ENCODE measurements at regions of chr6 and their contacts with region 1.

Region 1: DNA sequence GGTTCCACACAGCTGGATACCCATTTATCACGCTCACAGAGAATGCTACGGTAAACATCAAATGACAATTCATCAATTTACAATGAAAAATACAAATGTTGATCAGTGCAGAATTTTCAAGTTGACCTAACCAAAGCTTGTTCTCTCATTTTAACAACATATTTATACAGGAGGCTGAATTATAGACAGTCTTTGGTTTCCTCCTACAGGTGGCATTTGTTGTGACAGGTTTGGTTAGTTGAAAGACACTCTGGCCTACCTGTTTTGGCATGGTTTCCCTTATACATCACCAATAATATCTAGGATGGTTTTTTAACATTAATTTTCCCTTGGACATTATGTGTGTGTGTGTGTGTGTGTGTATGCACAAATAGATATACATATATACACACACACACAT is 642.5 kb upstream of the MMS22L start:
- DNase-seq: no peak
- ATAC-seq: peak; percentile 79
- H3K4me3 Mint-ChIP-seq: no peak overlapping the region
- H3K27ac Mint-ChIP-seq: peak overlapping the region; percentile 47; the same call in 1 of the 2 replicates
- H3K4me1 Mint-ChIP-seq: peaks cover 31% of the 10 kb centered on the region
- H3K27me3 Mint-ChIP-seq: no peaks in the 10 kb centered on the region
- CTCF ChIP-seq: no peak

Region 2: DNA sequence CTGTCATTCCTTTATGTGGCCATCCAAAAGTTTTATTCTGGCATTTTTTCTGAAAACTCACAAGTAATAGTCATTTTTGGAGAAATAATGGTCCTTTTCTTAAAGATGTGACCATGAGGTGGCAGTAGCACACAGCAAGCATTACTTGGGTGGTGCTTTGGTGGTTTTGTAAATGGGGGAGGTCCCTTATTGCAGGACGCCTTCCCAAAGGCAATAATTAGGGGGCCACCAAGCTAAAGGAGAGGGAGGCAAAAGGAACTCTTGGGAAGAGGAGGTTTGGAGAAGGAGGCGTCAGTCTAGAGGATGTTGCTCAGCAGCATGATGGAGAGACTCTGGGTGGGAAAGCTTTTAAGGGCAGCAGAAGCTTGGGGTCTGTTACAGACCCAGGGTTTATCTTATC is 219.9 kb before region 1 on chr6:
- CTCF ChIA-PET with region 1: interaction called, 11 read pairs
- POLR2A ChIA-PET with region 1: no interaction called
- DNase-seq: peak; percentile 25
- ATAC-seq: peak; percentile 93
- H3K4me3 Mint-ChIP-seq: no peak overlapping the region
- H3K27ac Mint-ChIP-seq: peak overlapping the region; percentile 7; the same call in 1 of the 2 replicates
- H3K4me1 Mint-ChIP-seq: peaks cover 25% of the 10 kb centered on the region
- H3K27me3 Mint-ChIP-seq: no peaks in the 10 kb centered on the region
- CTCF ChIP-seq: peak; percentile 55; the same call in 1 of the 2 replicates